Activated naive CD4-positive, alpha-beta T cell treated with anti-CD3 and anti-CD28 coated beads for 36 hours (primary cell): ENCODE measurements at regions of chr7 and their contacts with region 1.

Region 1: DNA sequence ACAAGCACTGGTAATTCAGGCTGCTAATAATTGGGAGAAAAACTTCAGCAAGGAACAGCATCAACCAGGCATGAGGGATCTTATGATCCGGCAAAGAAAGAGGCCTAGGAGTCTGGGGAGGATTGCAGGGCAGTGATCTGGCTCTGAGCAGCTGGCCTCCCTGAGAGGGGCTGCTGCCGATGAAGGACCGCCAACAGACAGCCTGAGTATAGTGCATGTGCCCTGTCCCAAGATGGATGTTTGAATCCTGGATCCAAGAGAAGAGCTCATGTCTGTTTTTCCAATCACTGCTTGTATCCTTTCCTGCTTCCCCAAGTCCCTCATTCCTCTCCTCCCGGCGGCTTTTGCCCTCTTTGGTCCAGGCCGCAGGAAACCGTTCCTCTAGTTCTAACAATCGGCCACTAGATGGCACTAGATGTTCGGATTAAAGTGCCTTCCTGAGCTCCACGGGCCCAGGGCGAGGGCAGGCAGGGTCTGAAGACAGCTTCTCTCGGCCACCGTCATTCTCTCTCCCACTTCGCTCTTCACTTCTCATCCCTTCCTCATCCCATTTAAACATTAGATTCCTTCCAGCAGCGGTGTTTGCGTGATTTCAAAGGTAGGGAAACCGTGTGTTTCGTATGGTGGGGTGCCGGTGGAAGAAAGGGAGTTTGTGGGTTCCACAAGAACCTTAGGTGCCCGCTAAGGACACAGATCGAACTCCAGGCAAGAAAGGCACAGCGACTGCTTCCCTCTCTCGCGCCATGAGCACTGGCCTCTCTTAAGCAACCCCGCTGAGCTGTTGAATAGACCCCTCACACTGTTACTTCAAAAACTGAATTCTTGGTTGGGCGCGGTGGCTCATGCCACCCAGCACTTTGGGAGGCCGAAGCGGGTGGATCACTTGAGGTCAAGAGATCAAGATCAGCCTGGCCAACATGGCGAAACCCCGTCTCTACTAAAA is 82.4 kb downstream of the ADCYAP1R1 start:
- DNase-seq: peak; percentile 68
- H3K4me3 Mint-ChIP-seq: no peak overlapping the region
- H3K27ac Mint-ChIP-seq: no peak overlapping the region
- H3K4me1 Mint-ChIP-seq: peaks cover 1% of the 10 kb centered on the region
- H3K27me3 Mint-ChIP-seq: no peaks in the 10 kb centered on the region

Region 2: GRCh38 chr7:30717181-30717580 is 417.3 kb before region 1 on chr7:
- CTCF ChIA-PET with region 1: no interaction called
- intact Hi-C with region 1: no loop called
- DNase-seq: no peak
- H3K4me3 Mint-ChIP-seq: no peak overlapping the region
- H3K27ac Mint-ChIP-seq: no peak overlapping the region
- H3K4me1 Mint-ChIP-seq: no peaks in the 10 kb centered on the region
- H3K27me3 Mint-ChIP-seq: no peaks in the 10 kb centered on the region

Region 3: GRCh38 chr7:31074120-31074383 is 60.5 kb before region 1 on chr7:
- CTCF ChIA-PET with region 1: no interaction called
- intact Hi-C with region 1: no loop called
- DNase-seq: no peak
- H3K4me3 Mint-ChIP-seq: no peak overlapping the region
- H3K27ac Mint-ChIP-seq: no peak overlapping the region
- H3K4me1 Mint-ChIP-seq: no peaks in the 10 kb centered on the region
- H3K27me3 Mint-ChIP-seq: no peaks in the 10 kb centered on the region

Region 4: GRCh38 chr7:31106303-31107120 is 28.0 kb before region 1 on chr7:
- CTCF ChIA-PET with region 1: interaction called, 10 read pairs
- intact Hi-C with region 1: no loop called
- DNase-seq: no peak
- H3K4me3 Mint-ChIP-seq: no peak overlapping the region
- H3K27ac Mint-ChIP-seq: no peak overlapping the region
- H3K4me1 Mint-ChIP-seq: no peaks in the 10 kb centered on the region
- H3K27me3 Mint-ChIP-seq: no peaks in the 10 kb centered on the region

Region 5: GRCh38 chr7:31443457-31443856 is 308.9 kb after region 1 on chr7:
- CTCF ChIA-PET with region 1: interaction called, 5 read pairs
- intact Hi-C with region 1: loop called (anchors 5 kb)
- DNase-seq: peak; percentile 3
- H3K4me3 Mint-ChIP-seq: no peak overlapping the region
- H3K27ac Mint-ChIP-seq: no peak overlapping the region
- H3K4me1 Mint-ChIP-seq: no peaks in the 10 kb centered on the region
- H3K27me3 Mint-ChIP-seq: no peaks in the 10 kb centered on the region

Region 6: GRCh38 chr7:31633894-31634494 is 499.5 kb after region 1 on chr7:
- CTCF ChIA-PET with region 1: interaction called, 13 read pairs
- intact Hi-C with region 1: loop called (anchors 1 kb)
- DNase-seq: peak; percentile 17
- H3K4me3 Mint-ChIP-seq: no peak overlapping the region
- H3K27ac Mint-ChIP-seq: no peak overlapping the region
- H3K4me1 Mint-ChIP-seq: no peaks in the 10 kb centered on the region
- H3K27me3 Mint-ChIP-seq: no peaks in the 10 kb centered on the region